Activated T-helper 2 cell treated with anti-CD3 and anti-CD28 coated beads, Interferon-gamma antibody, Interleukin-2, Interleukin-4, amounts not matched to agents 10 μg/mL and 5 μg/mL and 100 μg/mL, durations not matched to agents 14 hours and 24 hours and 36 hours (primary cell): ENCODE measurements at regions of chr16 and their contacts with region 1.

Region 1: DNA sequence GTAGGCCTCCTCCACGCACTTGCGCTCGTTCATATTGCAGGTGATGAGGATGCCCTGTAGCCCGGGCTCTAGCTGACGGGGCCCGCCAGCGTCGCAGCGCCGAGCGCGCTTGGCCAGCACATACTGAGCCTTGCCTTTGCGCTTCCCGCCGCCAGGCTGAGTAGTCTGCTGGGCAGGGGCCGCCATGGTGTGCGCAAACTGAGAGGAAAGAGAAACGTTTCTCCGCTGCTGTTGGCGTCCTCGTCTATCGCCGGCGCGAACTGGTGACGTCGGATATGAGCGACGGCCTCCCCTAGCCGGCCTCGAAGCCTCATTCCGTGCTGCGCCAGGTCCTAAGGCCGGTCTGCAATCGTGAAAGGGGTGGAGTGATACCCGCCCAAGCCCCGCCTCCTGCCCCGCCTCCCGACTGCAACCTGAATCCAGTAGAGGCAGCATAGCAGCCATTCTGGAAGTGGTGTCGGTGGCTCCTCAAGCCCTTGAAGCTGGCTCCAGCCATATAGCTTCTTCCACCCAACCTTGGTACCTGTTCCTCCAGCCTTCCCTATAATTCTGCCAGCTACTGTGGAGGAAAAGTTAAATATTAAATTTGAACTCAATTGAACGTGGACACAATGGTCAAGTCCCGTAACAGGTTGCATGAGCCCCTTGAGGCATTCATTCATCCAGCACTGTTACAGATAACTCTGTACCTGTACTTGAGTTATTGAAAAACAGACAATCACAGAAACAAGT is at the start of gene THUMPD1:
- DNase-seq: peak; percentile 92
- H3K4me3 Mint-ChIP-seq: peak within 1 kb of the TSS; percentile 92
- H3K27ac Mint-ChIP-seq: peak within 1 kb of the TSS; percentile 96
- H3K4me1 Mint-ChIP-seq: peaks cover 12% of the 10 kb centered on the region
- H3K27me3 Mint-ChIP-seq: no peaks in the 10 kb centered on the region
- total RNA-seq, gene THUMPD1: 46.3 and 47.7 TPM in 2 replicates

Region 2: GRCh38 chr16:20763461-20764232 is 21.9 kb after region 1 on chr16 and contains the start of gene ACSM3:
- intact Hi-C with region 1: loop called (anchors 1 kb)
- DNase-seq: peak; percentile 65
- H3K4me3 Mint-ChIP-seq: peak within 1 kb of the TSS; percentile 88
- H3K27ac Mint-ChIP-seq: peak within 1 kb of the TSS; percentile 94
- H3K4me1 Mint-ChIP-seq: peaks cover 20% of the 10 kb centered on the region
- H3K27me3 Mint-ChIP-seq: peaks cover 4% of the 10 kb centered on the region
- total RNA-seq, gene ACSM3: 3.9 and 5.5 TPM in 2 replicates

Region 3: GRCh38 chr16:20806168-20807050 is 64.7 kb after region 1 on chr16 and contains the starts of genes ERI2 and REXO5:
- intact Hi-C with region 1: loop called (anchors 2 kb)
- DNase-seq: peak; percentile 73
- H3K4me3 Mint-ChIP-seq: peak within 1 kb of the TSS; percentile 97
- H3K27ac Mint-ChIP-seq: peak within 1 kb of the TSS; percentile 91
- H3K4me1 Mint-ChIP-seq: peaks cover 28% of the 10 kb centered on the region
- H3K27me3 Mint-ChIP-seq: no peaks in the 10 kb centered on the region
- total RNA-seq, gene ERI2: 13.2 and 14.4 TPM in 2 replicates
- total RNA-seq, gene REXO5: 11.4 and 11.8 TPM in 2 replicates

Region 4: DNA sequence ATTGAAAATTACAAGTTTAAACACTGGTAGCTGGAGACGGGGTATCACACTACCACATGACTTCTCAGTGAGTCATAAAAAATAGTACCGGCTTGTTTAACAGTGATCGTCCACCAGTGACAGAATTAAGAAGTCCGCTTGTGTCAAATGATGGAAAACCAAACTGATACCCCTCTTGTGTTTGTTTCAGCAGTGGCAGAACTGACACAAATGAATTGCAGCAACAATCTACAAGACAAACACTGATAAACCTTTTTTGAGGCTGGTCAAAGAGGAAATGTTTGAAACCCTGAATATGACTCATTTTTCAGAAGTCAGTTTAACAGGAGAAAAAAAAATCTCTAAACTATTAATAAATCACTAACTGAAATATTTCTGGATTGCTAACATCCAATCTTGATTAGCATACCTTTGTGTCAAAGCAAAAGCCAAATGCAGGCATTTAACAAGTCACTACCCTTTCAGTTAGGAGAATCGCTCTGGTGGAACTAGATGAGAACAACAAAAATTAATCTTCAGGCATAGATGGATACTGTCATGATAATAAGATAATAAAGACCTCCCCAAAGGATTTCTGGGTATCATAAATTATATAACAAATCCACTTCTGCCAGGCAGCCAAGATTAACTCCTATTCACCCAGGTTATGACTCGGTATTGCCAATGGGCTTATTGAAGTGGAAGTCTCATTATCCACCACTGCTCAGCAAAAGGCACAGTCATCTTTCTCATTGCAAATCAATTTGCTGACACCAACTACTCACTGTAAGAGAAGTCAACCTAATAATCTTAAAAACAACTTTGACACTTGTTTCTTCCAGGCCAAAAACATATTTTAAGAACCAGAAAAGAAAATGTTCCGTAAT is 137.7 kb after region 1 on chr16:
- intact Hi-C with region 1: no loop called
- DNase-seq: no peak
- H3K4me3 Mint-ChIP-seq: no peak overlapping the region
- H3K27ac Mint-ChIP-seq: peak overlapping the region; percentile 76
- H3K4me1 Mint-ChIP-seq: peaks cover 77% of the 10 kb centered on the region
- H3K27me3 Mint-ChIP-seq: no peaks in the 10 kb centered on the region